ENCODE measurements at regions of chr9 and their contacts with region 1.

Region 1: DNA sequence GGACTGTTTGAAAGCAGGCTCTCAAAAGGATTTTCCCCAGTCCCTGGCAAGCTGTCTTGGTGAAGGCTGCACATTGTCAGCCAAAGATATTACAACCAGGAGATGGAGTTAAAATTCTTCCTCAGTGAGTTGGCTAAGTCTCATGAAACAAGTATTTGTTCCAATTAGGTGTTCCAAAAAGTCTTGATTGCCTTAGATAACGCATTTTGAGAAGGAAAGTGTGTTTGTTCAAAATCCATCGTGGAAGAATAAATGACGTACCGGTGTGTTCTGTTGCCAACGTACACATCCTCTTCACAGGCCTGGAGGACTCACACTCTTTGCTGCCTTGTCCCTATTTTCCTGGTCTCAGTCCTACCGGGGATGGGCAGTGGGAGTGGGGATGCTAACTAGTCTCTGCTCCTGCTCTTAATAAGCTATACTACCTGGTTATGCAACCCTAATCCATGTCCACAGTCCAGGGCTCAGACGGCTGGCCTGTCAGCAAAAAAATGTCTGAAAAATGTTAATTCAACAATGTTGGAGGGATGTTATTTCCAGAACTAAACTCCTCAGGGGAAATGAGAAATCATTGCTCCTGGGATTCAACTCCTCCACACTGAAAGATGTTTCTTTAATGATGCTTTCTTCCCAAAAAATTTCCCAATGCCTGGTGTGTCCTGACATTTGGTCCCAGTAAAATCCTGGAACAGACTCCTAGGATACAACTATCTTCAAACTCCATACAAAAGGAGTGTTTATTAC is 175.3 kb upstream of the KLF9 start:
- DNase-seq: no peak
- H3K4me3 ChIP-seq: no peak overlapping the region
- H3K27ac ChIP-seq: peak overlapping the region in 7 of 8 donors; percentile 2 to 62 (median 23)
- H3K4me1 ChIP-seq: peaks cover 0 to 3% (median 0%) of the 10 kb centered on the region in 6 donors
- H3K27me3 ChIP-seq: no peaks in the 10 kb centered on the region
- CTCF ChIP-seq: no peak
- POLR2A ChIP-seq: no peak

Region 2: GRCh38 chr9:70205367-70206032 is 384.2 kb before region 1 on chr9:
- intact Hi-C with region 1: no loop called
- DNase-seq: no peak
- H3K4me3 ChIP-seq: no peak overlapping the region
- H3K27ac ChIP-seq: no peak overlapping the region
- H3K4me1 ChIP-seq: no peaks in the 10 kb centered on the region
- H3K27me3 ChIP-seq: no peaks in the 10 kb centered on the region
- CTCF ChIP-seq: no peak
- POLR2A ChIP-seq: no peak

Region 3: GRCh38 chr9:70340572-70340971 is 249.2 kb before region 1 on chr9:
- intact Hi-C with region 1: no loop called
- DNase-seq: no peak
- H3K4me3 ChIP-seq: no peak overlapping the region
- H3K27ac ChIP-seq: no peak overlapping the region
- H3K4me1 ChIP-seq: peaks cover 0 to 10% (median 0%) of the 10 kb centered on the region in 6 donors
- H3K27me3 ChIP-seq: no peaks in the 10 kb centered on the region
- CTCF ChIP-seq: peak in 10 of 11 experiments; percentile 20 to 66 (median 51)
- POLR2A ChIP-seq: no peak

Region 4: DNA sequence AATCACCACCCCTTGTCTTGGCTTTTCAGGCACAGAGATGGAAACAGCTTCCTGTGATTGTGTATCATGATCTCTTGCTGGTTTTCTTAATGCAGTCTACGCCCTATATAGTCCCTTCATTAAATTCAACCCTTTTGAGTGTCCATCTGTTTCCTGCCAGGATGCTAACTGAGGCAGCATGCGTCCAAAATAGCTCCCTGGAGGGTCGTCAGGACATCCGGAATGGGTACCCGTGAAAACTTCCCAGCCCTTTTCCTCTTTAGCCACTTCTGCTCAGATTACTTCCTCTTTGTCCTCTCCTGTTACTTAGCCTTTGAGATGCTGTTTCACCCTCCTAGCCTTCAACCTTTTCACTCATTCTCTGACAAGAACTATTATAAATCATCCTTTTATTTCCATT is 95.5 kb before region 1 on chr9:
- intact Hi-C with region 1: loop called (anchors 10 kb)
- DNase-seq: no peak
- H3K4me3 ChIP-seq: no peak overlapping the region
- H3K27ac ChIP-seq: peak overlapping the region in 1 of 8 donors; percentile 5
- H3K4me1 ChIP-seq: peaks cover 0 to 40% (median 19%) of the 10 kb centered on the region in 6 donors
- H3K27me3 ChIP-seq: no peaks in the 10 kb centered on the region
- CTCF ChIP-seq: no peak
- POLR2A ChIP-seq: no peak

Region 5: DNA sequence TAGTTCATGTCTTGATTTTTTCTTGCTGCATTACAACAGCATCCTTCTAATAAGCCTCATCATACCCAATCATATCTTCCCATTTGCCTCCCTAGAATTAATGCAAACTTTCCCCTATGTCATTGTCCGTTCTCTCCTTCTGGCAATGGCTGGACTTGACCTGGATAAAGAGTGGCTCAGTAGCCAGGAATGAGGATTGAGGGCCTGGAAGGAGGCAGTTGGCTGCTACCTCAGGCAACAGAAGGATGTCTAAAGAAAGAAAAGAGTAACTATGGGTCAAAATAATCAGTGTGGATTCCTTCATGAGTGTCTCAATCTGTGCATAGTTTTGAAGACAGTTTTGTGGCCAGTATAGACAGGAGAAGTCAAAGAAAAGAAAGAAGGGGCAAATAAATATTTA is 322.0 kb after region 1 on chr9:
- intact Hi-C with region 1: no loop called
- DNase-seq: no peak
- H3K4me3 ChIP-seq: no peak overlapping the region
- H3K27ac ChIP-seq: no peak overlapping the region
- H3K4me1 ChIP-seq: no peaks in the 10 kb centered on the region
- H3K27me3 ChIP-seq: no peaks in the 10 kb centered on the region
- CTCF ChIP-seq: no peak
- POLR2A ChIP-seq: no peak

Measured in spleen (tissue), 13 donors.